ENCODE measurements at regions of chr6 and their contacts with region 1.

Region 1: DNA sequence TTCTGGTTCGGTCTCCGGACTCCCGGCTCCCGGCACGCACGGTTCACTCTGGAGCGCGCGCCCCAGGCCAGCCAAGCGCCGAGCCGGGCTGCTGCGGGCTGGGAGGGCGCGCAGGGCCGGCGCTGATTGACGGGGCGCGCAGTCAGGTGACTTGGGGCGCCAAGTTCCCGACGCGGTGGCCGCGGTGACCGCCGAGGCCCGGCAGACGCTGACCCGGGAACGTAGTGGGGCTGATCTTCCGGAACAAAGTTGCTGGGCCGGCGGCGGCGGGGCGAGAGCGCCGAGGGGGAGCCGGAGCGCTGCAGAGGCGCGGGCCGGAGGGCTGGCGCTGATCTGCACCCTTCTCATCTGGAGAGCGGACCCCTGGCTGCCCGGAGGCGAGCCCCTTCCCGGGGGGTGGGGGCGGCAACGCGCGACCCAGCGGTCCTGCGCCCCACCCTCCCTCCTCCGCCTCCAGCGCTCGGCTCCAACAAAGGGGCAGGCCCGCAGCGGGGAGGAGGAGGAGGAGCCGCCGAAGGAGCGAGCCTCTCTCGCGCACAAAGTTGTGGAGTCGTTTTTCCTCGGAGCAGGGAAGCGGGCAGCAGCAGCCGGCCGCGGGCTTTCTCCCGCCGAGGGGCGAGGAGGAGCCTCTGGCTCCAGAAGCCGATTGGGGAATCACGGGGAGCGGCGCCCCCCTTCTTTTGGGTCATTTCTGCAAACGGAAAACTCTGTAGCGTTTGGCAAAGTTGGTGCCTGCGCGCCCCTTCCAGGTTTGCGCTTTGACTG is at the start of gene UTRN:
- DNase-seq: peak; percentile 20 to 88
- H3K4me3 ChIP-seq: peak within 1 kb of the TSS; percentile 75 to 98
- H3K27ac ChIP-seq: peak within 1 kb of the TSS; percentile 98 to 99
- H3K4me1 ChIP-seq: peaks cover 0 to 8% of the 10 kb centered on the region in 2 donors
- H3K27me3 ChIP-seq: no peaks in the 10 kb centered on the region
- CTCF ChIP-seq: no peak
- total RNA-seq, gene UTRN: 69.9 TPM

Region 2: GRCh38 chr6:142728910-142729481 is 1556.0 kb before region 1 on chr6:
- intact Hi-C with region 1: no loop called
- DNase-seq: no peak
- H3K4me3 ChIP-seq: no peak overlapping the region
- H3K27ac ChIP-seq: no peak overlapping the region
- H3K4me1 ChIP-seq: no peaks in the 10 kb centered on the region
- H3K27me3 ChIP-seq: no peaks in the 10 kb centered on the region
- CTCF ChIP-seq: no peak

Region 3: GRCh38 chr6:144095331-144096002 is 189.5 kb before region 1 on chr6 and contains the start of gene SF3B5:
- intact Hi-C with region 1: loop called (anchors 1 kb)
- DNase-seq: peak; percentile 97 to 99
- H3K4me3 ChIP-seq: peak within 1 kb of the TSS; percentile 77 to 95
- H3K27ac ChIP-seq: peak within 1 kb of the TSS; percentile 80 to 82
- H3K4me1 ChIP-seq: peaks cover 5 to 17% of the 10 kb centered on the region in 2 donors
- H3K27me3 ChIP-seq: no peaks in the 10 kb centered on the region
- CTCF ChIP-seq: no peak
- total RNA-seq, gene SF3B5: 123 TPM

Region 4: GRCh38 chr6:144248476-144249301 is 36.3 kb before region 1 on chr6:
- intact Hi-C with region 1: loop called (anchors 1 kb)
- DNase-seq: no peak
- H3K4me3 ChIP-seq: no peak overlapping the region
- H3K27ac ChIP-seq: peak overlapping the region; percentile 34 to 50
- H3K4me1 ChIP-seq: peaks cover 3 to 12% of the 10 kb centered on the region in 2 donors
- H3K27me3 ChIP-seq: no peaks in the 10 kb centered on the region
- CTCF ChIP-seq: no peak

Region 5: DNA sequence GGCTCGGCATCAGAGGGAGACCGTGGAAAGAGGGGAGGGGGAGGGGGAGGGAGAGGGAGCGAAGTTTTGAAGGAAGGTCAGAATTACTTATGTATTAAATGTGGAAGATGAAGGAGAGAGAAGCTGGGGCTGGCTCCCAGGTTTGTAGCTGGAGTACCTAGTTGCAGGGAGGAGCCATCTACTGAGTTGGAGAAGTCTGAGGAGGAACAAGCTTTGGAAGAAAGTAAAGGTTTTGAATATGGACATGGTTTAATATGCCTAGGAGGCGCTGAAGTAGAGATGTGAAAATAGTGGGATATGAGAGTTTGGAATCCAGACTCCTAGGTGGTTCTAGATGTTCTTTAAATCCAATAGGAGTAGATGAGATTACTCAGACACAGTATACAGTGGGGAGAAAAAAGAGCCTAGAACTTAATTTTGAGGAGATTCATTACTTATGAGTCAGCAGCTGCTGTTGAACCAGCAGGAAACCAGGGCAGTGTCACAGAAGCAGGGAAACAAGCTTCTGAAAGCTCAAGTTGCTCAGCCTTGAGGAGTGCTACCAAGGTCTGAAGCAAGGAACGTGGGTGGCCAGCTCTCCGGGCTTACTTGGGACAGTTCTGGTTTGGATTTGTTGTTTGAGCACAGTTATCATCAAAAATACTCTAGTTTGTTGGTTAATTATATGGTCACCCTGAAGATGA is 149.5 kb after region 1 on chr6:
- intact Hi-C with region 1: loop called (anchors 2 kb)
- DNase-seq: no peak
- H3K4me3 ChIP-seq: no peak overlapping the region
- H3K27ac ChIP-seq: peak overlapping the region in 1 of 2 donors; percentile 62
- H3K4me1 ChIP-seq: peaks cover 0 to 4% of the 10 kb centered on the region in 2 donors
- H3K27me3 ChIP-seq: no peaks in the 10 kb centered on the region
- CTCF ChIP-seq: no peak

Region 6: GRCh38 chr6:144809120-144809519 is 524.2 kb after region 1 on chr6:
- intact Hi-C with region 1: no loop called
- DNase-seq: no peak
- H3K4me3 ChIP-seq: no peak overlapping the region
- H3K27ac ChIP-seq: no peak overlapping the region
- H3K4me1 ChIP-seq: no peaks in the 10 kb centered on the region
- H3K27me3 ChIP-seq: no peaks in the 10 kb centered on the region
- CTCF ChIP-seq: no peak

Region 7: DNA sequence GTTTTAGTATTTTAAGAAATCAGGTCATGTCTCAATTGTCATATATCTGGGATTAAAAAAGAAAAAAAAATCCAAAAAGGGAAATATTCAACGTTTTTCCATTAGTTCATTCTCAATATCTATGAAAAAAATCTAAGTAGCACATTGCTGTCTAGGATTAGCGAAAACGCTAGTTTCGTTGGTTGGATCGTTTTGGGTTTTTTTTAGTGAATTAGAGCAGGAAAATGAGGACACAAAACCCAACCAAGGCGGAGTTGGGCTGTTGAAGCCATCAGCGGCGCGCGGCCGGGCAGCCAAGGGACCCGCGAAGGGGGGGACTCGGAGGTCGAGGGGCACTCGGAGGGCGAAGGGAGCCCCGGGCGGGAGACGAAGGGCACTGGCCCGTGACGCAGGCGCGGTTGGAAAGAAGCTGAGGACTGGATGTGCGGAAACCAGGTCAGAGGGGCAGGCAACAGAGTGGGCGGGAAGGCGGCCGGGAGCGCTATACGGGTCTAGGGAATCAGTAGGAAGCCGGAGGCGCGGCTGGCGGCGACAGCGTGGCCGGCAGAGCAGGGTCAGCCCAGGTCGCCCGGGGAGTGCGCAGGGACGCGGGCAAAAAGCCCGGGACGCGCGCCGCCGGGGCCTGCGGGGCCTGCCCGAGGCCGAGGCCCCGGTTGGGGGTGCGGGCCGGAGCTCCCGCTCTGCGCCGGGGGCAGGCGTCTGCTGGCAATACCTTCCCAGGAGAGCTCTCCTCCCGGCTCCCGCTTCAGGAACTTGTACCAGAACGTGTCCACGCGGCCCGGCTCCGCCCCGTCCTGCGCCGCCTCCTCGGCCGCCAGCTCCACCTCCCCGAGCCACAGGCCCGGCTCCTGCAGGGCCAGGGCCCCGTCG is 1449.8 kb after region 1 on chr6:
- intact Hi-C with region 1: loop called (anchors 10 kb)
- DNase-seq: peak; percentile 65 to 94
- H3K4me3 ChIP-seq: peak overlapping the region; percentile 59 to 82
- H3K27ac ChIP-seq: peak overlapping the region; percentile 96 to 97
- H3K4me1 ChIP-seq: peaks cover 0 to 8% of the 10 kb centered on the region in 2 donors
- H3K27me3 ChIP-seq: no peaks in the 10 kb centered on the region
- CTCF ChIP-seq: no peak

Measured in ascending aorta (tissue), 2 donors.